ENCODE measurements at regions of chr12 and their contacts with region 1.

Region 1: GRCh38 chr12:8890313-8891085 is 23.8 kb upstream of the PHC1 start:
- DNase-seq: peak; percentile 32
- ATAC-seq: peak; percentile 68
- H3K4me3 ChIP-seq: peak overlapping the region in 1 of 3 experiments; percentile 38; a peak in 1 of 6 replicates
- H3K27ac ChIP-seq: no peak overlapping the region
- H3K4me1 ChIP-seq: no peaks in the 10 kb centered on the region
- H3K27me3 ChIP-seq: 0 out of 5 replicates have a peak, but pooled peaks cover 0 to 4% of the 10 kb centered on the region in 2 experiments
- CTCF ChIP-seq: peak; percentile 77
- EP300 ChIP-seq: no peak
- POLR2A ChIP-seq: no peak
- RAD21 ChIP-seq: 0 out of 2 replicates have a peak, but pooled peaks have one; percentile 15

Region 2: DNA sequence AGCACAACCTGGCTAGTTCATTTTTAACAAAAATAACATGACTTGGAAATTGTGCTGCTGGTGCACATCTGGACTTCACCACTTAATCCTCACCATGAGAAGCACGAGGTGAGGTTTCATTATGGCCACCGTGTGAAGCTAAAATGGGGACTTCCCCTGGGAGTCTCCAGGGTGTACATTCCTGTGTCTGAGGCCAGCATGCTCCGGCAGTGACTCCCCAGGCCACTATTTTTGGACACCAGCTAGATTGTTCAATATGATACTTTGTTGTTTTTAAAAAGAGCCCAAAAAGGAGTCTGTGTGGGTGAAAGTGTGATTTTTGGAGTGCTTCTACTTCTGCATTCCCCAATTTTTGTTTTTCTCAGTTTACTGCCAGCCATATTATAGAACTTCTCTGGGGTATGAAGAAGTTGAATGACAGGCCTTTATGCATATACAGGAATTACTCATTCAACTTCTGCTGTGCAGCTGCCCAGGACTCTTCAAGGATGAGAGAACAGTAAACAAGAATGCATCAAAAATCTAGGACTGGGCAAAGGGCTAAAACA is 260.9 kb before region 1 on chr12:
- CTCF ChIA-PET with region 1: no interaction called
- POLR2A ChIA-PET with region 1: no interaction called
- in situ Hi-C with region 1: no loop called
- intact Hi-C with region 1: no loop called
- DNase-seq: no peak
- ATAC-seq: no peak
- H3K4me3 ChIP-seq: no peak overlapping the region
- H3K27ac ChIP-seq: no peak overlapping the region
- H3K4me1 ChIP-seq: no peaks in the 10 kb centered on the region
- H3K27me3 ChIP-seq: no peaks in the 10 kb centered on the region; a peak in 1 of 5 replicates
- CTCF ChIP-seq: no peak
- EP300 ChIP-seq: no peak
- POLR2A ChIP-seq: no peak
- RAD21 ChIP-seq: no peak

Region 3: GRCh38 chr12:8662593-8662992 is 227.9 kb before region 1 on chr12 and contains the start of gene MFAP5:
- CTCF ChIA-PET with region 1: interaction called, 4 read pairs
- POLR2A ChIA-PET with region 1: interaction called, 3 read pairs
- in situ Hi-C with region 1: no loop called
- intact Hi-C with region 1: loop called (anchors 2 kb)
- DNase-seq: no peak
- ATAC-seq: no peak
- H3K4me3 ChIP-seq: no peak within 1 kb of the TSS
- H3K27ac ChIP-seq: no peak within 1 kb of the TSS
- H3K4me1 ChIP-seq: no peaks in the 10 kb centered on the region
- H3K27me3 ChIP-seq: peaks cover 0 to 10% of the 10 kb centered on the region in 2 experiments; a peak in 3 of 5 replicates
- CTCF ChIP-seq: no peak
- EP300 ChIP-seq: no peak
- POLR2A ChIP-seq: no peak
- RAD21 ChIP-seq: no peak
- total RNA-seq, gene MFAP5: not detected in 2 replicates

Region 4: GRCh38 chr12:8681041-8681902 is 209.2 kb before region 1 on chr12:
- CTCF ChIA-PET with region 1: interaction called, 14 read pairs
- POLR2A ChIA-PET with region 1: no interaction called
- in situ Hi-C with region 1: loop called (anchors 5 kb)
- intact Hi-C with region 1: loop called (anchors 1 kb)
- DNase-seq: no peak
- ATAC-seq: no peak
- H3K4me3 ChIP-seq: no peak overlapping the region
- H3K27ac ChIP-seq: no peak overlapping the region
- H3K4me1 ChIP-seq: no peaks in the 10 kb centered on the region
- H3K27me3 ChIP-seq: 0 out of 5 replicates have a peak, but pooled peaks cover 0 to 2% of the 10 kb centered on the region in 2 experiments
- CTCF ChIP-seq: no peak
- EP300 ChIP-seq: no peak
- POLR2A ChIP-seq: no peak
- RAD21 ChIP-seq: no peak

Region 5: GRCh38 chr12:8780389-8780788 is 110.1 kb before region 1 on chr12:
- CTCF ChIA-PET with region 1: interaction called, 4 read pairs
- POLR2A ChIA-PET with region 1: no interaction called
- in situ Hi-C with region 1: no loop called
- intact Hi-C with region 1: loop called (anchors 2 kb)
- DNase-seq: peak; percentile 16
- ATAC-seq: peak; percentile 46; the same call in 1 of the 3 replicates
- H3K4me3 ChIP-seq: no peak overlapping the region
- H3K27ac ChIP-seq: no peak overlapping the region
- H3K4me1 ChIP-seq: no peaks in the 10 kb centered on the region
- H3K27me3 ChIP-seq: no peaks in the 10 kb centered on the region
- CTCF ChIP-seq: 0 out of 2 replicates have a peak, but pooled peaks have one; percentile 15
- EP300 ChIP-seq: no peak
- POLR2A ChIP-seq: no peak
- RAD21 ChIP-seq: no peak

Region 6: DNA sequence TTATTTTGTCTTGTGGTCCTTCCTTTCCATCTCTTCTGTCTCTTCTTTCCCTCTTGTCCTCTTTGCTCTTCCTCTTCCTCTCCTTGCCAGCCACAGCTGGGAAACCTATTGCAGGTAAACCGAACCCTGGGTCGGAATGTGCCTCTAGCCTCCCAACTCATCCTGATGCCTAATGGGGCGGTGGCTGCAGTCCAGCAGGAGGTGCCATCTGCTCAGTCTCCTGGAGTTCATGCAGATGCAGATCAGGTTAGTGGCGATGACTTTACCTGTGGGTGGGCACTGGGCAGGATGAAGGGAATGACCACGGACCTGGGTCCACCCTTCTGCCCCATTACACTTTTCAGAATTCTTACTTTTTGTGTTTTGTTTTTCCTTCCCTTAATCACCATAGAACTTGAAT is 32.0 kb after region 1 on chr12:
- CTCF ChIA-PET with region 1: no interaction called
- POLR2A ChIA-PET with region 1: no interaction called
- in situ Hi-C with region 1: no loop called
- intact Hi-C with region 1: no loop called
- DNase-seq: no peak
- ATAC-seq: peak; percentile 50; the same call in 2 of the 3 replicates
- H3K4me3 ChIP-seq: no peak overlapping the region
- H3K27ac ChIP-seq: no peak overlapping the region
- H3K4me1 ChIP-seq: no peaks in the 10 kb centered on the region
- H3K27me3 ChIP-seq: no peaks in the 10 kb centered on the region
- CTCF ChIP-seq: peak; percentile 46
- EP300 ChIP-seq: no peak
- POLR2A ChIP-seq: no peak
- RAD21 ChIP-seq: no peak

Measured in HepG2 (cell line).